Left colon (tissue), 2 donors: ENCODE measurements at regions of chr13 and their contacts with region 1.

Region 1: GRCh38 chr13:71546881-71547280 is 320.1 kb downstream of the DACH1 start:
- DNase-seq: no peak
- ATAC-seq: no peak

Region 2: GRCh38 chr13:71503781-71504180 is 43.1 kb before region 1 on chr13:
- intact Hi-C with region 1: no loop called
- DNase-seq: no peak
- ATAC-seq: no peak

Region 3: GRCh38 chr13:71803066-71803465 is 256.2 kb after region 1 on chr13:
- intact Hi-C with region 1: no loop called
- DNase-seq: no peak
- ATAC-seq: no peak

Region 4: DNA sequence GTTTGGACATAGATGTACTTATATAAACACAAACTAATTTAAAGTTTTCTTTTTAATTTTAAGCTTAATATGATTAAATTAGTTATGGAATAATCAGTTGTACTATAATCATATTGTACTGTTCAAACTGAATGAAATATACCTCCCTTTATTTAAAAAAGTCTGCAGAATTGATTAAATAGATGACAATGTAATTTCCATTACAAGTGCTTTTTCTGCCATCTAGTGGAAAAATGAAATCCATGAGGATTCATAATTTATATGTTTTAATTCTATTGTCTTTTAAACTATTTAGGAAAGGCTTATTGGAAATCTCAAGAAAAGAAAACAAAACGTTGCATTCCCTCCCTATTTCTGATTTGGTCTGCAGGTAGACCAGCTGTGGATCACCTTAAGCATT is 1149.7 kb after region 1 on chr13:
- intact Hi-C with region 1: loop called in 1 of 2 experiments (anchors 5 kb)
- DNase-seq: no peak
- ATAC-seq: no peak